CD4-positive, alpha-beta T cell (primary cell): ENCODE measurements at regions of chr1 and their contacts with region 1.

Region 1: GRCh38 chr1:226121587-226122400 is 59.3 kb downstream of the H3-3A start:
- DNase-seq: peak; percentile 48 to 90 (median 70)
- ATAC-seq: peak; percentile 54
- H3K4me3 ChIP-seq: peak overlapping the region; percentile 58
- H3K4me3 Mint-ChIP-seq: peak overlapping the region; percentile 80
- H3K27ac ChIP-seq: peak overlapping the region; percentile 45 to 77
- H3K27ac Mint-ChIP-seq: peak overlapping the region; percentile 91
- H3K4me1 ChIP-seq: peaks cover 37% of the 10 kb centered on the region
- H3K4me1 Mint-ChIP-seq: peaks cover 33% of the 10 kb centered on the region
- H3K27me3 ChIP-seq: no peaks in the 10 kb centered on the region
- H3K27me3 Mint-ChIP-seq: no peaks in the 10 kb centered on the region
- CTCF ChIP-seq: peak; percentile 64

Region 2: GRCh38 chr1:225474986-225475820 is 646.6 kb before region 1 on chr1:
- CTCF ChIA-PET with region 1: interaction called, 3 read pairs
- POLR2A ChIA-PET with region 1: no interaction called
- intact Hi-C with region 1: loop called in 1 of 2 experiments (anchors 5 kb)
- DNase-seq: peak; percentile 27 to 88 (median 60)
- ATAC-seq: peak; percentile 85
- H3K4me3 ChIP-seq: no peak overlapping the region
- H3K4me3 Mint-ChIP-seq: no peak overlapping the region
- H3K27ac ChIP-seq: no peak overlapping the region
- H3K27ac Mint-ChIP-seq: peak overlapping the region; percentile 39
- H3K4me1 ChIP-seq: peaks cover 55% of the 10 kb centered on the region
- H3K4me1 Mint-ChIP-seq: peaks cover 42% of the 10 kb centered on the region
- H3K27me3 ChIP-seq: no peaks in the 10 kb centered on the region
- H3K27me3 Mint-ChIP-seq: no peaks in the 10 kb centered on the region
- CTCF ChIP-seq: peak; percentile 100

Region 3: DNA sequence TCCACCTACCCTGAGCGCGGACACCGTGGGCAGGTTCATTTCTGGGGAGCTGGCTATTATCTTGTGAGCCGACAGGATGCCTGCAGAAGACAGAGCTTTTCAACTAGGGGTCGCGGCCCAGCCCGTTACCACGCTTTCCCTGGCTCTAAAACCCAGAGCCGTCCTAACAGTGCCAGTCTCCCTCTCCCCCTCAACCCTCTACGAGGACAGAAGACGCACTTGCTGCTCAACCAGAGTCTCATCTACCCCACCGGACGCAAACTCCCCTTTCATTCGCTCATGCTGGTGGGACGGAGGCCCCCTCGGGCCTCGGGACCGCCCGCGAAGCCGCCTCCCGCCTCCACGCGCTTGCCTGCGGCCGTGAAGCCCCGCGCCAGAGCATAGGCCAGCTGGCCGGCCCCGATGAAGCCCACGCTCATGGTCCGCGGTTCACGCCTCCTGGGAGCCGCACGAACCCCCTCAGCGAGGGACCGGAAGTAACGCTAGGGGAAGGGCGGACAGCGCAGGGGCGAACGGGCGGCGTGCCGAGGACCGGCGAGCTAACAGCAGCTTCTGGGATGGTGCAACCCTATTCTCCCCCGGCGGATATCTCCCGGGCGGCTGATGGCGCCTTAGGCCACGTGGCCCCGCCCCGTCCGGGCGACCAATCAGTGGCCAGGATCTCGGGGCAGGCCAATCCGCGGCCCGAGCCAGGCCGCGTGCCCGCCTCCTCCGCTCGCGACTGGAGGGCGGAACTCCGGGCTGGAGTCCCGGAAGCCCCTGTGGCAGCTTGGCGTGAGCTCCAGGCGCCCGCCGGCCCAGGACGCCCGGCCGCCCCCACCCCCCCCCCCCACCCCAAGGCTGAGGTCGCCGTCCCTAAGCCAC is 197.9 kb before region 1 on chr1 and contains the start of gene PYCR2:
- CTCF ChIA-PET with region 1: no interaction called
- POLR2A ChIA-PET with region 1: no interaction called
- intact Hi-C with region 1: no loop called
- DNase-seq: peak; percentile 87 to 98 (median 93)
- ATAC-seq: peak; percentile 98
- H3K4me3 ChIP-seq: peak within 1 kb of the TSS; percentile 95
- H3K4me3 Mint-ChIP-seq: peak within 1 kb of the TSS; percentile 95
- H3K27ac ChIP-seq: peak within 1 kb of the TSS; percentile 79 to 89
- H3K27ac Mint-ChIP-seq: peak within 1 kb of the TSS; percentile 98
- H3K4me1 ChIP-seq: peaks cover 74% of the 10 kb centered on the region
- H3K4me1 Mint-ChIP-seq: peaks cover 54% of the 10 kb centered on the region
- H3K27me3 ChIP-seq: no peaks in the 10 kb centered on the region
- H3K27me3 Mint-ChIP-seq: no peaks in the 10 kb centered on the region
- CTCF ChIP-seq: no peak
- total RNA-seq, gene PYCR2: 24.1 to 26.2 TPM

Region 4: GRCh38 chr1:226109829-226110248 is 12.0 kb before region 1 on chr1:
- CTCF ChIA-PET with region 1: interaction called, 10 read pairs
- POLR2A ChIA-PET with region 1: interaction called, 7 read pairs
- intact Hi-C with region 1: no loop called
- DNase-seq: peak; percentile 50 to 90 (median 64)
- ATAC-seq: peak; percentile 85
- H3K4me3 ChIP-seq: peak overlapping the region; percentile 58
- H3K4me3 Mint-ChIP-seq: peak overlapping the region; percentile 92
- H3K27ac ChIP-seq: peak overlapping the region; percentile 29 to 53
- H3K27ac Mint-ChIP-seq: peak overlapping the region; percentile 70
- H3K4me1 ChIP-seq: peaks cover 18% of the 10 kb centered on the region
- H3K4me1 Mint-ChIP-seq: peaks cover 9% of the 10 kb centered on the region
- H3K27me3 ChIP-seq: no peaks in the 10 kb centered on the region
- H3K27me3 Mint-ChIP-seq: no peaks in the 10 kb centered on the region
- CTCF ChIP-seq: no peak

Region 5: GRCh38 chr1:226308723-226309315 is 187.0 kb after region 1 on chr1 and contains the start of gene LIN9:
- CTCF ChIA-PET with region 1: interaction called, 4 read pairs
- POLR2A ChIA-PET with region 1: no interaction called
- intact Hi-C with region 1: loop called in 1 of 2 experiments (anchors 10 kb)
- DNase-seq: peak; percentile 83 to 94 (median 89)
- ATAC-seq: peak; percentile 91
- H3K4me3 ChIP-seq: peak within 1 kb of the TSS; percentile 98
- H3K4me3 Mint-ChIP-seq: peak within 1 kb of the TSS; percentile 95
- H3K27ac ChIP-seq: peak within 1 kb of the TSS in 1 of 2 donors; percentile 30
- H3K27ac Mint-ChIP-seq: peak within 1 kb of the TSS; percentile 67
- H3K4me1 ChIP-seq: peaks cover 12% of the 10 kb centered on the region
- H3K4me1 Mint-ChIP-seq: peaks cover 26% of the 10 kb centered on the region
- H3K27me3 ChIP-seq: peaks cover 0 to 8% of the 10 kb centered on the region in 2 experiments
- H3K27me3 Mint-ChIP-seq: peaks cover 25% of the 10 kb centered on the region
- CTCF ChIP-seq: no peak
- total RNA-seq, gene LIN9: 1.3 to 1.5 TPM

Region 6: DNA sequence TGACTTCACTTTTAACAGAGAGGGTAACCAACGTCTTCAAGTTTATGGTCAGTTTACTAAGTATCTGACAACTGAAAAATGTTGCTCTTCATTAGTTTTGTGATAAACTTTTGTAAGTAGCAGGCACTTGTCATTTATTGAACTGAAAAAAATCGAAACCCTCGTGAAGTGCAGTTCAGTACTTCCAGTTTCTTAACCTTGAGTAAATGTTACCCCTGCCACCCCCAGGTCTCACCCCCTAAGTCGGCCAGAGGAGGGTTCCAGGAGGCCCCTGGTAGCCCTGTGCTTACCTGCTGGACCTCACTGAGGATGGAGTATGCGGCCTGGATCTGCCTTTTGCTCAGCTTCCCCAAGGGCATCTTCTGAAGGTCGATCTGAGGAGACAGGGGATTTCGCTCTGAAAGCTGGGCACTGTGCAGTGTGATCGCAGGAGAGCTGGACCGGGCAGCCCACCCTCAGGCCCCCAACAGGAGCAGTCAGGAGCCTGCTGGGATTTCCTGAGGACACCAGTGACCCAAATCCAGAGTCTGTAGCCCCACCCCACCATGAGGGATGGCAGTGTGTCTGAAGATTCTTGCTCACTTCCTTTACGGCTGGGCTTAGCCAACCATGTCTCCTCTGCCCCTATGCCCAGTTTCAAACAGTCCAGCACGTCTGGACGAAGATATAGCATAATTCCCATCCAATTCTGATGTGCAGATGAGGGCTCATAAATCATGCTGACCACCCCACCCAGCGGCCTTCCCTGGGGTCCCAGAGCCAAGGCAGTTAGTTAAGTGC is 248.5 kb after region 1 on chr1:
- CTCF ChIA-PET with region 1: no interaction called
- POLR2A ChIA-PET with region 1: no interaction called
- intact Hi-C with region 1: no loop called
- DNase-seq: no peak
- ATAC-seq: no peak
- H3K4me3 ChIP-seq: no peak overlapping the region
- H3K4me3 Mint-ChIP-seq: no peak overlapping the region
- H3K27ac ChIP-seq: no peak overlapping the region
- H3K27ac Mint-ChIP-seq: no peak overlapping the region
- H3K4me1 ChIP-seq: no peaks in the 10 kb centered on the region
- H3K4me1 Mint-ChIP-seq: no peaks in the 10 kb centered on the region
- H3K27me3 ChIP-seq: no peaks in the 10 kb centered on the region
- H3K27me3 Mint-ChIP-seq: no peaks in the 10 kb centered on the region
- CTCF ChIP-seq: no peak

Region 7: DNA sequence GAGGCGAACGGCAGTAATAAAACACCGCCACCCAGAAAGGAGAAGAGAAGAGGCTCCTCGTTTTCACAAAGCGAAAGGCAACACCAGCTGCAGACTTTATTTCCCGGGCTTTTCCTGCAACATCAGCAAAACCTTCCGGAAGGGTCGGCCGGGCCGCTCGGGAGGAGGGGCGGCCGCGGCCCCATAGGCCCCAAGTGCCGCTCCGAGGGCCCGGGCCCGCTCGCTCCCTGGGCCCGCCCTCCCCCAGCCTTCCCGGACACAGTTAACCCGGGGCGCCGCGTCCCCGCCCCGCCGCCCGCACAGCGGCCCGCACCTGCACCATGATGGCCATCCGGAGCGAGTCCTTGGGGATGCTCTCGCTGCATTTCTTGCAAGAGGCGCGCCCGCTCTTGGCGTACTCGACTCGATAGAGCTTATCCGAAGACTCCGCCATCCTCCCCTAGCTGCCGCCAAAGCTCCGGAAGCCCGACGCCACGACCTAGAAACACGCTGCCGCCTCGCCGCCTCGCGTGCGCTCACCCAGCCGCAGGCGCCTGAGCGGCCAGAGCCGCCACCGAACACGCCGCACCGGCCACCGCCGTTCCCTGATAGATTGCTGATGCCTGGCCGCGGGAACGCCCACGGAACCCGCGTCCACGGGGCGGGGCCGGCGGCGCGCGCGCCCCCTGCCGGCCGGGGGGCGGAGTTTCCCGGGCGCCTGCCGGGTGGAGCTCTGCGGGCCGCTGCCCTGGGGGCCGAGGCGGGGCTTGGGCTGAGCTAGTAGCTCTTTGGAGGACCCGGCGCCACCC is 285.9 kb after region 1 on chr1 and contains the start of gene PARP1:
- CTCF ChIA-PET with region 1: no interaction called
- POLR2A ChIA-PET with region 1: interaction called, 3 read pairs
- intact Hi-C with region 1: loop called in 1 of 2 experiments (anchors 10 kb)
- DNase-seq: peak; percentile 75 to 95 (median 85)
- ATAC-seq: peak; percentile 82
- H3K4me3 ChIP-seq: peak within 1 kb of the TSS; percentile 79
- H3K4me3 Mint-ChIP-seq: peak within 1 kb of the TSS; percentile 98
- H3K27ac ChIP-seq: peak within 1 kb of the TSS; percentile 48 to 55
- H3K27ac Mint-ChIP-seq: peak within 1 kb of the TSS; percentile 94
- H3K4me1 ChIP-seq: peaks cover 46% of the 10 kb centered on the region
- H3K4me1 Mint-ChIP-seq: peaks cover 55% of the 10 kb centered on the region
- H3K27me3 ChIP-seq: no peaks in the 10 kb centered on the region
- H3K27me3 Mint-ChIP-seq: no peaks in the 10 kb centered on the region
- CTCF ChIP-seq: peak; percentile 69
- total RNA-seq, gene PARP1: 59.3 to 63.6 TPM